Activated B cell treated with CpG ODN at 0.5 μM for 24 hours (primary cell): ENCODE measurements at regions of chr12 and their contacts with region 1.

Region 1: GRCh38 chr12:56224102-56224701 is at the start of gene NABP2:
- DNase-seq: peak; percentile 88
- ATAC-seq: peak; percentile 72
- H3K4me3 Mint-ChIP-seq: peak within 1 kb of the TSS; percentile 99
- H3K27ac Mint-ChIP-seq: peak within 1 kb of the TSS; percentile 98
- H3K4me1 Mint-ChIP-seq: peaks cover 48% of the 10 kb centered on the region
- H3K27me3 Mint-ChIP-seq: no peaks in the 10 kb centered on the region
- CTCF ChIP-seq: peak; percentile 67
- total RNA-seq, gene NABP2: 27.7 and 31.4 TPM in 2 replicates

Region 2: GRCh38 chr12:55926738-55927587 is 297.2 kb before region 1 on chr12:
- CTCF ChIA-PET with region 1: no interaction called
- POLR2A ChIA-PET with region 1: no interaction called
- intact Hi-C with region 1: loop called (anchors 5 kb)
- DNase-seq: peak; percentile 84
- ATAC-seq: peak; percentile 48
- H3K4me3 Mint-ChIP-seq: peak overlapping the region; percentile 98
- H3K27ac Mint-ChIP-seq: peak overlapping the region; percentile 98
- H3K4me1 Mint-ChIP-seq: peaks cover 67% of the 10 kb centered on the region
- H3K27me3 Mint-ChIP-seq: no peaks in the 10 kb centered on the region
- CTCF ChIP-seq: peak; percentile 50

Region 3: GRCh38 chr12:56152318-56153033 is 71.7 kb before region 1 on chr12 and contains the start of gene MYL6B:
- CTCF ChIA-PET with region 1: no interaction called
- POLR2A ChIA-PET with region 1: interaction called, 12 read pairs
- intact Hi-C with region 1: loop called (anchors 1 kb)
- DNase-seq: peak; percentile 87
- ATAC-seq: peak; percentile 89
- H3K4me3 Mint-ChIP-seq: peak within 1 kb of the TSS; percentile 93
- H3K27ac Mint-ChIP-seq: peak within 1 kb of the TSS; percentile 99
- H3K4me1 Mint-ChIP-seq: peaks cover 40% of the 10 kb centered on the region
- H3K27me3 Mint-ChIP-seq: no peaks in the 10 kb centered on the region
- CTCF ChIP-seq: no peak
- total RNA-seq, gene MYL6B: 25.2 and 36.2 TPM in 2 replicates

Region 4: GRCh38 chr12:56212361-56212760 is 11.8 kb before region 1 on chr12:
- CTCF ChIA-PET with region 1: interaction called, 52 read pairs
- POLR2A ChIA-PET with region 1: interaction called, 111 read pairs
- intact Hi-C with region 1: no loop called
- DNase-seq: no peak
- ATAC-seq: no peak
- H3K4me3 Mint-ChIP-seq: no peak overlapping the region
- H3K27ac Mint-ChIP-seq: no peak overlapping the region
- H3K4me1 Mint-ChIP-seq: peaks cover 24% of the 10 kb centered on the region
- H3K27me3 Mint-ChIP-seq: no peaks in the 10 kb centered on the region
- CTCF ChIP-seq: no peak

Region 5: DNA sequence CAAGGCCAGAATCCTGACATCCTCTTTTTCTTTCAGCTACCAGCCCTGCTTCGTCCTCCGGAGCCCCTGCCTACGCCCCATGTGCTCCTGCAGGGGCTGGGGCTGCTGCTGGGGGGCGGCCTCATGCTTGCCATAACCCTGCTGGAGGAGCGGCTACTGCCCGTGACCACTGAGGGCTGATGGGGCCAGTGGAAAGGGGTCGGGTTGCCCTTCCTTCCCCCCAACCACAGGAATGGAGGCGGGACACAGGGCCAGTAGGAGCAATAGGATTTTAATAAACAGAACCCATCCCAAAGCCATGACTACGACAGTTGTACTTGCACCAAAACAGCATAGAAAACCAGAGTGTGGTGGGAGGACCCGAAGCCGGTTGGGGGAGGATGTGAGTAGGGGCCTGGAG is 13.3 kb after region 1 on chr12:
- CTCF ChIA-PET with region 1: no interaction called
- POLR2A ChIA-PET with region 1: no interaction called
- intact Hi-C with region 1: no loop called
- DNase-seq: no peak
- ATAC-seq: no peak
- H3K4me3 Mint-ChIP-seq: no peak overlapping the region
- H3K27ac Mint-ChIP-seq: no peak overlapping the region
- H3K4me1 Mint-ChIP-seq: peaks cover 8% of the 10 kb centered on the region
- H3K27me3 Mint-ChIP-seq: no peaks in the 10 kb centered on the region
- CTCF ChIP-seq: no peak

Region 6: DNA sequence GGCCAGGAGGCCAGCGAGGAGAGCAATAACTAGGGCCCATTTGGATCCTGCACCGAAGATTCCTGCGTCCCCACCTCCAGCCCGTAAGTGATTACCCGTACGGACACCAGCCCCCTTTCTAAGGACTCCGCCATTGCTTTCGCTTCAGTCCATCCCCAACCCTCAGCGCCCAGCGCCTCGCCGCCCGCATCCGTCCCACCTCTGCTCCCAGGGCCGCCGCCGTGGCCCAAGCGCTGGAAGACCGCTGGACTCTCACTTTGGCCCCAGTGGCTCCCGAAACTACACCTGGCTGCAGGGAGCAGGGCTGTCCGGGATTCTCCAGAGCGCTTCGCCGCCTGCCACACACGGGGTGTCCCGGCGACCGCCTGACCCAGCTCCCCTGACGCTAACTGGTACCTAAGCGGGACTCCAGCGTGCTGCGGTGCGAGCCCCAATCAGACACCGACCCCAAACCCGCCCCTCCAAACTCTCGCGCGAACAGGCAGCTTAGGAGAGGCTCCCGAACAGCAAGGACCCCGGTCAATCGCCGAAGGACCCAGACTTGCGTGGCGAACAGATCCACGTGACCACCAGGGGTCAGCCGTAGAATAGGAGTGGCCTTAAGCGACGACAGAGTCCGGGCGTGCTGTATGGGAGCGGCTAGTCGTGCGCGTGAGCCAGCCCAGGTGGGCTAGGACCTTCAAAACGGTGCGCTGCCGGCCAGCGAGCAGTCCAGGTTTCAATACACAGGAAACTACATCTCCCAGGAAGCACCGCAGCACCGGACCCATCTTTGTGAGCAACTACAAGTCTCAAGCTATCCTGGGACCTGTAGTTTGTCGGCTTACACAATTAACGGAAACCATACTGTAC is 91.6 kb after region 1 on chr12 and contains the start of gene CNPY2:
- CTCF ChIA-PET with region 1: no interaction called
- POLR2A ChIA-PET with region 1: interaction called, 17 read pairs
- intact Hi-C with region 1: loop called (anchors 1 kb)
- DNase-seq: peak; percentile 85
- ATAC-seq: peak; percentile 89
- H3K4me3 Mint-ChIP-seq: peak within 1 kb of the TSS; percentile 98
- H3K27ac Mint-ChIP-seq: peak within 1 kb of the TSS; percentile 98
- H3K4me1 Mint-ChIP-seq: peaks cover 21% of the 10 kb centered on the region
- H3K27me3 Mint-ChIP-seq: no peaks in the 10 kb centered on the region
- CTCF ChIP-seq: no peak
- total RNA-seq, gene CNPY2: 72.1 and 98.8 TPM in 2 replicates

Region 7: GRCh38 chr12:56468216-56469006 is 244.2 kb after region 1 on chr12 and contains the start of gene SPRYD4:
- CTCF ChIA-PET with region 1: interaction called, 9 read pairs
- POLR2A ChIA-PET with region 1: interaction called, 5 read pairs
- intact Hi-C with region 1: loop called (anchors 1 kb)
- DNase-seq: peak; percentile 92
- ATAC-seq: peak; percentile 90
- H3K4me3 Mint-ChIP-seq: peak within 1 kb of the TSS; percentile 94
- H3K27ac Mint-ChIP-seq: peak within 1 kb of the TSS; percentile 94
- H3K4me1 Mint-ChIP-seq: peaks cover 36% of the 10 kb centered on the region
- H3K27me3 Mint-ChIP-seq: no peaks in the 10 kb centered on the region
- CTCF ChIP-seq: no peak
- total RNA-seq, gene SPRYD4: 5.8 and 7.5 TPM in 2 replicates